Activated CD4-positive, alpha-beta memory T cell treated with anti-CD3 and anti-CD28 coated beads, Interleukin-2, amount 10 ng/mL, durations not matched to agents 7 days and 5 days (primary cell): ENCODE measurements at regions of chr3 and their contacts with region 1.

Region 1: DNA sequence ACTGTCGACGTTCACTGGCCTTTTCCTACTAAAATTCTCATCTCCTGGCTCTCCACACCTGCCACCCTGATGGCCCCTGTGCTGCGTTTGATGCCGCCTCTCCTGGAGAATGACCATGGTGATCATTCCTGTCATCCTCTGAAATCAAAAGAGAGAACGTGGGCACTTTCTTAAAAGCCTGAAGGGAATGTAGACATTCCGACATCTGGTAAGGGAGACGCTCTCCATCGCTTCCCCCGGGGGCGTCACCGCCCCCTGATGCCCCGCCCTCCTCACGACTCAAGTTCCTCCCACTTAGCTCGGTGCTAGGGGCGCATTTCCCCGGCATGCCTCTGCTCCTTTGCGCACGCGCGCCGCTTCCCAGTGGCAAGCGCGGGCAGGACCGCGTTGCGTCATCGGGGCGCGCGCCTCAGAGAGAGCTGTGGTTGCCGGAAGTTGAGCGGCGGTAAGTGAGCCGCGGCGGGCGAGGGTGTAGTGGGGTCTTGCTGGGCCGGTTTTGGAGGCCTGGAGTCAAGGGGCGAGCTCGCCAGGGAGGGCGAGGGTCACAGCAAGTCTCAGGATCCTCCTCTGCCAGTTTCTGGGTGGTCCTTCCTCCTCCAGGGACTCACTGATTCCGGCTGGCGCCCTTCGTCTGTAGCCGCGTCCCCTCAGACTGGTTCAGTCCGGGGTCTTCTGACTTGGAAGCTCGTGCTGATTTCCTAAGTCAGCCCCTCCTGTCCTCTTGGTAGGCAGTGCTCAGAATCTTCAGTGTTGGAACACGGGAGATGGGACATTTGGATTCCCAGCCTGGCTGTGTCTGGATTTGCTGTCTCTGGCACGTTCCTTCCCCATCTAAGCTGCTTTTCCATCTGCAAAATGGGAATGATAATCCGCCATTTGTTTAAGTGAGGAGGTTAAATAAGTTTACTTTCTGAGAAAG is at the start of gene ATG7:
- DNase-seq: peak; percentile 97
- H3K4me3 Mint-ChIP-seq: peak within 1 kb of the TSS; percentile 87
- H3K27ac Mint-ChIP-seq: peak within 1 kb of the TSS; percentile 87
- H3K4me1 Mint-ChIP-seq: peaks cover 52% of the 10 kb centered on the region
- H3K27me3 Mint-ChIP-seq: peaks cover 3% of the 10 kb centered on the region
- total RNA-seq, gene ATG7: 26.9 to 35.1 TPM

Region 2: GRCh38 chr3:11282250-11283138 is 10.2 kb after region 1 on chr3:
- CTCF ChIA-PET with region 1: interaction called, 9 read pairs
- POLR2A ChIA-PET with region 1: interaction called, 74 read pairs
- DNase-seq: no peak
- H3K4me3 Mint-ChIP-seq: no peak overlapping the region
- H3K27ac Mint-ChIP-seq: peak overlapping the region; percentile 12
- H3K4me1 Mint-ChIP-seq: peaks cover 30% of the 10 kb centered on the region
- H3K27me3 Mint-ChIP-seq: no peaks in the 10 kb centered on the region

Region 3: GRCh38 chr3:11288786-11289682 is 16.8 kb after region 1 on chr3:
- CTCF ChIA-PET with region 1: interaction called, 11 read pairs
- POLR2A ChIA-PET with region 1: interaction called, 74 read pairs
- DNase-seq: no peak
- H3K4me3 Mint-ChIP-seq: no peak overlapping the region
- H3K27ac Mint-ChIP-seq: peak overlapping the region; percentile 73
- H3K4me1 Mint-ChIP-seq: peaks cover 55% of the 10 kb centered on the region
- H3K27me3 Mint-ChIP-seq: no peaks in the 10 kb centered on the region

Region 4: GRCh38 chr3:11300970-11301369 is 28.7 kb after region 1 on chr3:
- CTCF ChIA-PET with region 1: interaction called, 3 read pairs
- POLR2A ChIA-PET with region 1: interaction called, 19 read pairs
- DNase-seq: peak; percentile 26
- H3K4me3 Mint-ChIP-seq: no peak overlapping the region
- H3K27ac Mint-ChIP-seq: peak overlapping the region; percentile 56
- H3K4me1 Mint-ChIP-seq: peaks cover 28% of the 10 kb centered on the region
- H3K27me3 Mint-ChIP-seq: no peaks in the 10 kb centered on the region

Region 5: GRCh38 chr3:11306817-11307589 is 34.8 kb after region 1 on chr3:
- CTCF ChIA-PET with region 1: no interaction called
- POLR2A ChIA-PET with region 1: interaction called, 19 read pairs
- DNase-seq: peak; percentile 50
- H3K4me3 Mint-ChIP-seq: peak overlapping the region; percentile 6
- H3K27ac Mint-ChIP-seq: peak overlapping the region; percentile 72
- H3K4me1 Mint-ChIP-seq: peaks cover 36% of the 10 kb centered on the region
- H3K27me3 Mint-ChIP-seq: no peaks in the 10 kb centered on the region

Region 6: DNA sequence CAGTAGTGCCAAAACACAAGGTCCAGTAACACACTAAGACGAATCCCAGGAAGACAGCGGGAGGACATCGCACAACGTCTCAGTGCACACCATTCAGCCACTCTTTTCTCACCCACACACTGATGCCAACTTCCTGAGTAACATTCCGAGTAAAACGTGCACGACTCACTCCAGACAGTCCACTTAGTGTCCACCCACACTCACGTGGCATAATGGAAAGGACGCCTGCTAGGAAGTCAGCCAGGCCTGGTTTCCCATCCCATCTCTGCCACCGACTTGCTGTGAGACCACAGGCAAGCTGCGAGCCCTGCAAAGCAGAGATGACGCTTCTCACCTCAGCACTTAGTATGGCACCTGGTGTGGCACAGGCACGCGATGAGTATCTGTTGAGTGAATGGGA is 408.3 kb after region 1 on chr3:
- CTCF ChIA-PET with region 1: no interaction called
- POLR2A ChIA-PET with region 1: no interaction called
- DNase-seq: no peak
- H3K4me3 Mint-ChIP-seq: no peak overlapping the region
- H3K27ac Mint-ChIP-seq: no peak overlapping the region
- H3K4me1 Mint-ChIP-seq: no peaks in the 10 kb centered on the region
- H3K27me3 Mint-ChIP-seq: no peaks in the 10 kb centered on the region